AG04449 (cell line): ENCODE measurements at regions of chr15 and their contacts with region 1.

Region 1: GRCh38 chr15:39580117-39580484 is 778 bp upstream of the THBS1 start:
- DNase-seq: peak; percentile 98
- H3K4me3 ChIP-seq: peak overlapping the region; percentile 95
- CTCF ChIP-seq: peak; percentile 93

Region 2: GRCh38 chr15:38894243-38894948 is 685.7 kb before region 1 on chr15:
- CTCF ChIA-PET with region 1: no interaction called
- POLR2A ChIA-PET with region 1: interaction called, 11 read pairs
- DNase-seq: peak; percentile 96
- H3K4me3 ChIP-seq: no peak overlapping the region
- CTCF ChIP-seq: no peak

Region 3: GRCh38 chr15:39188925-39189324 is 391.2 kb before region 1 on chr15:
- CTCF ChIA-PET with region 1: interaction called, 6 read pairs
- POLR2A ChIA-PET with region 1: interaction called, 33 read pairs
- DNase-seq: peak; percentile 77
- H3K4me3 ChIP-seq: no peak overlapping the region
- CTCF ChIP-seq: no peak

Region 4: DNA sequence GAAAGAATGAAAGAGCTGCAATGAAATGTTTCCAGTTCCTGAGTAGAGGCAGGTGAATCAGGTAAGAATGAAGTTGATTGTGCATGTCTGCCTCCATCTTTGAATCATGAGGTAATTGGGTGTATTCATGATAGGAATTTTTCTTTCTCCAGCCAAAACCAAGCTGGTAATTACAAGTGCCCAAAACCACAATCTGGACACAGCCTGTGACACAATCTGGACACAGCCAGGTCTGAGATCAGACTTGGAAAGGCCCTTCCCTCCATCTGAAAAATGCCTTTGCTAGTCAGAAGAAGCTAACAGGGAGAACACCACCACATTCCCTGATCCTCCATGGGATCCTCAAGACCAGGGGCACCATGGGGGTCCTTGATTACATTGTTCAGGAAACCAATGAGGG is 337.8 kb before region 1 on chr15:
- CTCF ChIA-PET with region 1: no interaction called
- POLR2A ChIA-PET with region 1: interaction called, 32 read pairs
- DNase-seq: no peak
- H3K4me3 ChIP-seq: no peak overlapping the region
- CTCF ChIP-seq: no peak

Region 5: DNA sequence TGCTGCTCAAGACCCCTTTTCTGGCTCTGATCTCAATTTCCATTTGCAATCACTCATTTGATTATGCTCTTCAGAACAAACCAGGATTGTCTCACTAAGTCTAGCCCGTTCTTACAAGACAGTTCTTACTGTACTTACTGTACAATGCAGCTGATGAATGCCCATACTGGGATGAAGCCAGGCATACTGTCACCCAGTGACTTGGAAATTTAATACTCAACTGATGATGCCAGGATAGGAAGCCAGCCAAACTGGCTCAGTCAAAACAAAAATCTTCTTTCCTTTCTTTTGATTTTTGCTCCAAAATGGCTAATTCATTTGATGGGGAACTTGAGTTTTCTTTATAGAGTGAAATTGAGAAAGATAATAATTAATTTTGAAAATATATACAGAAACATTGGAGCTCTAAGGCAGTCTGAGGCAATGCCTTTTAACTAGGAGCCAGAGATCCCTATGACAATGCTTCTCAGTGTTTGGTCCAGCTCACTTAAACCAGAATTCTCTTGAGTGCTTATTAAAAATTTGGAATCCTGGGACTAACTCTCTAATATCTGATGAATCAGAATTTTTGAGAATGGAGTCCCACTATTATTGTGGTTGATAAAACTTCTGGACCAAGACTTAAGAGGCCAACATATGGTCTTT is 264.8 kb before region 1 on chr15:
- CTCF ChIA-PET with region 1: interaction called, 3 read pairs
- POLR2A ChIA-PET with region 1: interaction called, 17 read pairs
- DNase-seq: no peak
- H3K4me3 ChIP-seq: no peak overlapping the region
- CTCF ChIP-seq: no peak

Region 6: GRCh38 chr15:39504808-39505207 is 75.3 kb before region 1 on chr15:
- CTCF ChIA-PET with region 1: no interaction called
- POLR2A ChIA-PET with region 1: interaction called, 10 read pairs
- DNase-seq: peak; percentile 82
- H3K4me3 ChIP-seq: no peak overlapping the region
- CTCF ChIP-seq: no peak

Region 7: DNA sequence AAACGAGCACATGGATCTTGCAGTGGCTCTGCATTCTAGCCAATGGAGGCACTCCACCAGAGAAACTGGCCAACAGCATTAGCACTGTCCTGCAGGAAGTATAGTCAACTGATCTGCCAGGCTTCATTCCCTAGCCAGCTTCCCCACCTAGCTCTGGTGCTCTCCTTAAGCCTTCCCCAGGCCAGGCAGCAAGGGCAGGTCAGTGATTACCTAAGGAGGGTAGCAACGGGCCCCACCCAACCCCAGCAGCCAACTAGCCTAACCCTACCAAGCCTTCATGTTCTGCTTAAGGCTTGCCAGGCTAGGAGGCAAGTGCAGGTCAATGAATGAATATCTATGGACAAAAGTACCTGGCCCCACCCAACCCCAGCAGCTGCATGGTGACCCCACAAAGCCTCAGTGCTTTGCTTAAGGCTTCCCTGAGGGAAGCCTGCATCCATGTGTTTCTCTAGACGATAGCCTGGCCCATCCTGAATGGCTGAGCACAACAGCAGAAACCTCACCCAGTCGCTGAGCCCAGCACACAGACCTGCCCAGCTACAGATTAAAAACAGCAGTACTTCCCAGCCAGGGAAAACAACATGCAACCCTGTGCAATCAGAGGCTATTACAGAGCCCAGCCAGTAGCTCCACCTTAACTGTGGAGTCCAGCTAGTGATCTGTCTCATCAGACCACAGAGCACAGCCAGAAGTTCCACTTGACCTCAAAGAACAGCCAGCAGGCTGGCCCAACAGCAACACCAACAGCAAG is 29.2 kb after region 1 on chr15:
- CTCF ChIA-PET with region 1: no interaction called
- POLR2A ChIA-PET with region 1: no interaction called
- DNase-seq: no peak
- H3K4me3 ChIP-seq: no peak overlapping the region
- CTCF ChIP-seq: no peak